Activated B cell treated with CpG ODN at 0.5 μM for 24 hours (primary cell): ENCODE measurements at regions of chr10 and their contacts with region 1.

Region 1: GRCh38 chr10:124447741-124448466 is 1.9 kb downstream of the NKX1-2 start:
- DNase-seq: no peak
- ATAC-seq: no peak
- H3K4me3 Mint-ChIP-seq: peak overlapping the region; percentile 66
- H3K27ac Mint-ChIP-seq: no peak overlapping the region
- H3K4me1 Mint-ChIP-seq: peaks cover 33% of the 10 kb centered on the region
- H3K27me3 Mint-ChIP-seq: peaks cover 63% of the 10 kb centered on the region
- CTCF ChIP-seq: no peak

Region 2: GRCh38 chr10:123147635-123148413 is 1300.1 kb before region 1 on chr10 and contains the start of gene HMX2:
- CTCF ChIA-PET with region 1: no interaction called
- POLR2A ChIA-PET with region 1: no interaction called
- intact Hi-C with region 1: loop called (anchors 10 kb)
- DNase-seq: peak; percentile 24
- ATAC-seq: peak; percentile 11
- H3K4me3 Mint-ChIP-seq: peak within 1 kb of the TSS; percentile 69
- H3K27ac Mint-ChIP-seq: peak within 1 kb of the TSS; percentile 47
- H3K4me1 Mint-ChIP-seq: peaks cover 52% of the 10 kb centered on the region
- H3K27me3 Mint-ChIP-seq: peaks cover 56% of the 10 kb centered on the region
- CTCF ChIP-seq: no peak
- total RNA-seq, gene HMX2: 0.13 TPM in 1 of 2 replicates, not detected in the other

Region 3: GRCh38 chr10:124497196-124497881 is 49.4 kb after region 1 on chr10:
- CTCF ChIA-PET with region 1: no interaction called
- POLR2A ChIA-PET with region 1: no interaction called
- intact Hi-C with region 1: no loop called
- DNase-seq: no peak
- ATAC-seq: no peak
- H3K4me3 Mint-ChIP-seq: no peak overlapping the region
- H3K27ac Mint-ChIP-seq: no peak overlapping the region
- H3K4me1 Mint-ChIP-seq: peaks cover 2% of the 10 kb centered on the region
- H3K27me3 Mint-ChIP-seq: no peaks in the 10 kb centered on the region
- CTCF ChIP-seq: no peak